Esophagus muscularis mucosa (tissue), 4 donors: ENCODE measurements at regions of chr1 and their contacts with region 1.

Region 1: GRCh38 chr1:52697795-52698674 is at the start of gene COA7:
- DNase-seq: peak; percentile 95
- H3K4me3 ChIP-seq: peak within 1 kb of the TSS; percentile 67 to 92 (median 75)
- H3K27ac ChIP-seq: peak within 1 kb of the TSS; percentile 82 to 90 (median 88)
- H3K4me1 ChIP-seq: peaks cover 10 to 31% (median 27%) of the 10 kb centered on the region in 4 donors
- H3K27me3 ChIP-seq: no peaks in the 10 kb centered on the region
- CTCF ChIP-seq: peak in 1 of 3 experiments; percentile 12
- EP300 ChIP-seq: no peak
- POLR2A ChIP-seq: peak; percentile 6
- total RNA-seq, gene COA7: 8.3 to 9.7 (median 9.2) TPM

Region 2: DNA sequence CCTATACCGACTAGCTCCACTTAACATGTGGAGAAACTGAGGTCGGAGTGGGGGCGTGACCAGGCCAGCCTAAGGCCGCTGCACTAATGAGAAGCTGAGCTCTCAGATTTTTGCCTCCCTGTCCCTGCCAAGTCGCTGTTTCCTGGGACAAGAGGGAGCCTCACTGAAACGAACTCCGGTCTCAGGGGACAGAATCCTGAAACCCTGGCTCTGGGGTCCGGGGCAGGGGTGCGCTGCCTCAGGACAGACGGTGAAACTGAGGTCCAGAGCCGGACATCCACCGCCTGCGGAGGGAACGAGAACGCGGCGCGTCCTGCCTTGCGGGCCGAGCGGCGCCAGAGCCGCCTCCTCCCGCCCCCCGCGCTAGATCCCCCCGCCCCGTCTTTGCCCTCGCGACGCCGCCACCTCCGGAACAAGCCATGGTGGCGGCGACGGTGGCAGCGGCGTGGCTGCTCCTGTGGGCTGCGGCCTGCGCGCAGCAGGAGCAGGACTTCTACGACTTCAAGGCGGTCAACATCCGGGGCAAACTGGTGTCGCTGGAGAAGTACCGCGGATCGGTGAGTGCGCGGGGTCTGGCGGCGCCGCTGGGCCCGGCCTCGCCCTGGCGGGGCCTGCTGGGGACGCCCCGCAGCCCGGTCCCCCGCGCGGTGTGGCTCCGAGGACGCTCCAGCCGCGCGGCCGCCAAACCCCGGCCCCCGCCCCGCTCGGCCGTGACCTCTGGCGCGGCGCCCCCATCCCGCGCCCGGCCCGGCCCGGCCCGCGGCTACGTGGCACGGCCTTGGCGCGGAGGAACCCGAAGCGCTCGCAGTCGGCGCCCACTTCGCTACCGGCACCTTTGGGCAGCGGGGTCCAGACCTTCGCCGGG is 95.8 kb before region 1 on chr1 and contains the start of gene GPX7:
- intact Hi-C with region 1: loop called (anchors 10 kb)
- DNase-seq: no peak
- H3K4me3 ChIP-seq: peak within 1 kb of the TSS; percentile 66 to 74 (median 69)
- H3K27ac ChIP-seq: peak within 1 kb of the TSS; percentile 81 to 87 (median 85)
- H3K4me1 ChIP-seq: peaks cover 21 to 37% (median 33%) of the 10 kb centered on the region in 4 donors
- H3K27me3 ChIP-seq: no peaks in the 10 kb centered on the region
- CTCF ChIP-seq: no peak
- EP300 ChIP-seq: no peak
- POLR2A ChIP-seq: no peak
- total RNA-seq, gene GPX7: 9.3 to 17.3 (median 16.4) TPM

Region 3: GRCh38 chr1:52738893-52739292 is 40.9 kb after region 1 on chr1:
- intact Hi-C with region 1: no loop called
- DNase-seq: no peak
- H3K4me3 ChIP-seq: no peak overlapping the region
- H3K27ac ChIP-seq: peak overlapping the region in 2 of 4 donors; percentile 36 to 47
- H3K4me1 ChIP-seq: peaks cover 37 to 70% (median 44%) of the 10 kb centered on the region in 4 donors
- H3K27me3 ChIP-seq: no peaks in the 10 kb centered on the region
- CTCF ChIP-seq: no peak
- EP300 ChIP-seq: no peak
- POLR2A ChIP-seq: no peak